Naive thymus-derived CD4-positive, alpha-beta T cell (primary cell): ENCODE measurements at regions of chr19 and their contacts with region 1.

Region 1: DNA sequence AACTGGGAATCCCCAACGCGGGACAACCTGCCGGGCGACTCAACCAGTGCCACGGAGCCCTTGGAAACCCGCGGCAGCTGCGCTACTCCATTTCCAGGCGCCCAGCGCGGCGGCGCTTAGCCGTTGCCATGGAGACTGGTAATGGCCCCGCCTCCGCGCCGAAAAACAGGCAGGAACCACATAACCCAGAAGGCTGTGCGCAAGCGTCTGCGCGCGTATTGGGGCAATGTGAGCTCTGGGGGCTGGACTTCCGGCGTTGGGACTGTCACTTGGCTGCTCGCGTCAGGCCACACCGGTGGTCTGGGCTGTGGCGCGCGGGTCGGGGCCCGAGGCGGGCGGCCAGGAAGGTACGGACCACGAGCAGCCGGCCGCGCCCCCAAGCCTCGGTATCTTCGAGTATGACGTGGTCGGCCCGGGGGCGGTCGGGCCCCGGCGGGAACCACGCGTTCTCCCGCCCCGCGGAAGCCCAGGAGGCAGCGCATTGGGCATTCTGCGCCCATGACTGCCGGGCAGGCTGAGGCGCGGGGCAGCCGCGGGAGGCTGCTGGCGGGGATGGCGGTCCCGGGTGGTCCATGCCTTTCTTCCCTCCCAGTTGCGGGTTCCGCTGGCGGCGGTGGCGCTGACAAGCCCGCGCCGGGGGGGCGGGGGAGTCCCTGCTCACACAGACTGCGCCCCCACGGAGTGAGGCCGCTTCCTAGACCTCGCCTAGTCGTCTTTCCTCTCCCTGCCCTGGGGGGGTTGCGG is at the start of gene ZNF324B:
- DNase-seq: peak; percentile 90 to 97 (median 94)
- ATAC-seq: peak; percentile 99
- H3K4me3 ChIP-seq: peak within 1 kb of the TSS; percentile 63
- H3K4me3 Mint-ChIP-seq: peak within 1 kb of the TSS; percentile 85 to 98 (median 88)
- H3K27ac ChIP-seq: peak within 1 kb of the TSS; percentile 81
- H3K27ac Mint-ChIP-seq: peak within 1 kb of the TSS in 8 of 9 donors; percentile 2 to 90 (median 71)
- H3K4me1 ChIP-seq: peaks cover 0 to 4% of the 10 kb centered on the region in 2 donors
- H3K4me1 Mint-ChIP-seq: peaks cover 12 to 23% (median 19%) of the 10 kb centered on the region in 7 donors
- H3K27me3 ChIP-seq: no peaks in the 10 kb centered on the region
- H3K27me3 Mint-ChIP-seq: peaks cover 8 to 26% (median 17%) of the 10 kb centered on the region in 5 donors
- total RNA-seq, gene ZNF324B: 9.1 to 13.9 (median 11.8) TPM

Region 2: GRCh38 chr19:57279418-57280066 is 1172.0 kb before region 1 on chr19:
- CTCF ChIA-PET with region 1: no interaction called
- POLR2A ChIA-PET with region 1: no interaction called
- intact Hi-C with region 1: loop called in 1 of 2 experiments (anchors 5 kb)
- DNase-seq: peak in 6 of 9 donors; percentile 60 to 81 (median 78)
- ATAC-seq: peak; percentile 85
- H3K4me3 ChIP-seq: peak overlapping the region; percentile 80
- H3K4me3 Mint-ChIP-seq: no peak overlapping the region
- H3K27ac ChIP-seq: peak overlapping the region; percentile 98
- H3K27ac Mint-ChIP-seq: peak overlapping the region in 2 of 9 donors; percentile 6 to 51
- H3K4me1 ChIP-seq: peaks cover 18 to 23% of the 10 kb centered on the region in 2 donors
- H3K4me1 Mint-ChIP-seq: peaks cover 7 to 33% (median 25%) of the 10 kb centered on the region in 7 donors
- H3K27me3 ChIP-seq: no peaks in the 10 kb centered on the region
- H3K27me3 Mint-ChIP-seq: no peaks in the 10 kb centered on the region

Region 3: GRCh38 chr19:58107778-58108545 is 343.6 kb before region 1 on chr19:
- CTCF ChIA-PET with region 1: no interaction called
- POLR2A ChIA-PET with region 1: no interaction called
- intact Hi-C with region 1: no loop called
- DNase-seq: no peak
- ATAC-seq: no peak
- H3K4me3 ChIP-seq: no peak overlapping the region
- H3K4me3 Mint-ChIP-seq: no peak overlapping the region
- H3K27ac ChIP-seq: no peak overlapping the region
- H3K27ac Mint-ChIP-seq: no peak overlapping the region
- H3K4me1 ChIP-seq: no peaks in the 10 kb centered on the region
- H3K4me1 Mint-ChIP-seq: no peaks in the 10 kb centered on the region
- H3K27me3 ChIP-seq: no peaks in the 10 kb centered on the region
- H3K27me3 Mint-ChIP-seq: peaks cover 0 to 6% (median 0%) of the 10 kb centered on the region in 5 donors

Region 4: GRCh38 chr19:58362272-58362994 is 89.1 kb before region 1 on chr19 and contains the start of gene ZNF497:
- CTCF ChIA-PET with region 1: no interaction called
- POLR2A ChIA-PET with region 1: no interaction called
- intact Hi-C with region 1: loop called in 1 of 2 experiments (anchors 1 kb)
- DNase-seq: peak; percentile 91 to 96 (median 95)
- ATAC-seq: peak; percentile 92
- H3K4me3 ChIP-seq: peak within 1 kb of the TSS; percentile 99
- H3K4me3 Mint-ChIP-seq: peak within 1 kb of the TSS; percentile 89 to 99 (median 95)
- H3K27ac ChIP-seq: peak within 1 kb of the TSS; percentile 78
- H3K27ac Mint-ChIP-seq: peak within 1 kb of the TSS; percentile 71 to 96 (median 90)
- H3K4me1 ChIP-seq: peaks cover 5 to 7% of the 10 kb centered on the region in 2 donors
- H3K4me1 Mint-ChIP-seq: peaks cover 7 to 21% (median 11%) of the 10 kb centered on the region in 7 donors
- H3K27me3 ChIP-seq: no peaks in the 10 kb centered on the region
- H3K27me3 Mint-ChIP-seq: peaks cover 0 to 5% (median 0%) of the 10 kb centered on the region in 5 donors
- total RNA-seq, gene ZNF497: 1.0 to 2.7 (median 1.8) TPM

Region 5: GRCh38 chr19:58400916-58401839 is 50.4 kb before region 1 on chr19:
- CTCF ChIA-PET with region 1: no interaction called
- POLR2A ChIA-PET with region 1: no interaction called
- intact Hi-C with region 1: loop called (anchors 1 kb)
- DNase-seq: peak; percentile 96 to 100 (median 98)
- ATAC-seq: peak; percentile 97
- H3K4me3 ChIP-seq: peak overlapping the region; percentile 77
- H3K4me3 Mint-ChIP-seq: peak overlapping the region; percentile 86 to 98 (median 94)
- H3K27ac ChIP-seq: peak overlapping the region; percentile 91
- H3K27ac Mint-ChIP-seq: peak overlapping the region; percentile 88 to 97 (median 94)
- H3K4me1 ChIP-seq: peaks cover 6 to 13% of the 10 kb centered on the region in 2 donors
- H3K4me1 Mint-ChIP-seq: peaks cover 6 to 19% (median 8%) of the 10 kb centered on the region in 7 donors
- H3K27me3 ChIP-seq: peaks cover 0 to 3% of the 10 kb centered on the region in 2 donors
- H3K27me3 Mint-ChIP-seq: peaks cover 5 to 20% (median 7%) of the 10 kb centered on the region in 5 donors

Region 6: GRCh38 chr19:58475714-58476497 is 24.4 kb after region 1 on chr19 and contains the start of gene ZNF446:
- CTCF ChIA-PET with region 1: no interaction called
- POLR2A ChIA-PET with region 1: no interaction called
- intact Hi-C with region 1: loop called (anchors 1 kb)
- DNase-seq: peak; percentile 84 to 97 (median 96)
- ATAC-seq: peak; percentile 92
- H3K4me3 ChIP-seq: peak within 1 kb of the TSS; percentile 77
- H3K4me3 Mint-ChIP-seq: peak within 1 kb of the TSS; percentile 78 to 99 (median 96)
- H3K27ac ChIP-seq: peak within 1 kb of the TSS; percentile 91
- H3K27ac Mint-ChIP-seq: peak within 1 kb of the TSS; percentile 87 to 100 (median 99)
- H3K4me1 ChIP-seq: peaks cover 14 to 16% of the 10 kb centered on the region in 2 donors
- H3K4me1 Mint-ChIP-seq: peaks cover 6 to 29% (median 17%) of the 10 kb centered on the region in 7 donors
- H3K27me3 ChIP-seq: no peaks in the 10 kb centered on the region
- H3K27me3 Mint-ChIP-seq: no peaks in the 10 kb centered on the region
- total RNA-seq, gene ZNF446: 9.5 to 20.0 (median 15.1) TPM

Region 7: GRCh38 chr19:58519355-58520256 is 68.1 kb after region 1 on chr19 and contains the start of gene ZBTB45:
- CTCF ChIA-PET with region 1: no interaction called
- POLR2A ChIA-PET with region 1: no interaction called
- intact Hi-C with region 1: loop called in 1 of 2 experiments (anchors 1 kb)
- DNase-seq: peak; percentile 81 to 97 (median 88)
- ATAC-seq: peak; percentile 89
- H3K4me3 ChIP-seq: peak within 1 kb of the TSS; percentile 76
- H3K4me3 Mint-ChIP-seq: peak within 1 kb of the TSS; percentile 90 to 97 (median 95)
- H3K27ac ChIP-seq: peak within 1 kb of the TSS; percentile 86
- H3K27ac Mint-ChIP-seq: peak within 1 kb of the TSS; percentile 92 to 99 (median 97)
- H3K4me1 ChIP-seq: peaks cover 10 to 14% of the 10 kb centered on the region in 2 donors
- H3K4me1 Mint-ChIP-seq: peaks cover 29 to 43% (median 37%) of the 10 kb centered on the region in 7 donors
- H3K27me3 ChIP-seq: no peaks in the 10 kb centered on the region
- H3K27me3 Mint-ChIP-seq: peaks cover 0 to 3% (median 0%) of the 10 kb centered on the region in 5 donors
- total RNA-seq, gene ZBTB45: 9.8 to 19.2 (median 17.0) TPM

Region 8: DNA sequence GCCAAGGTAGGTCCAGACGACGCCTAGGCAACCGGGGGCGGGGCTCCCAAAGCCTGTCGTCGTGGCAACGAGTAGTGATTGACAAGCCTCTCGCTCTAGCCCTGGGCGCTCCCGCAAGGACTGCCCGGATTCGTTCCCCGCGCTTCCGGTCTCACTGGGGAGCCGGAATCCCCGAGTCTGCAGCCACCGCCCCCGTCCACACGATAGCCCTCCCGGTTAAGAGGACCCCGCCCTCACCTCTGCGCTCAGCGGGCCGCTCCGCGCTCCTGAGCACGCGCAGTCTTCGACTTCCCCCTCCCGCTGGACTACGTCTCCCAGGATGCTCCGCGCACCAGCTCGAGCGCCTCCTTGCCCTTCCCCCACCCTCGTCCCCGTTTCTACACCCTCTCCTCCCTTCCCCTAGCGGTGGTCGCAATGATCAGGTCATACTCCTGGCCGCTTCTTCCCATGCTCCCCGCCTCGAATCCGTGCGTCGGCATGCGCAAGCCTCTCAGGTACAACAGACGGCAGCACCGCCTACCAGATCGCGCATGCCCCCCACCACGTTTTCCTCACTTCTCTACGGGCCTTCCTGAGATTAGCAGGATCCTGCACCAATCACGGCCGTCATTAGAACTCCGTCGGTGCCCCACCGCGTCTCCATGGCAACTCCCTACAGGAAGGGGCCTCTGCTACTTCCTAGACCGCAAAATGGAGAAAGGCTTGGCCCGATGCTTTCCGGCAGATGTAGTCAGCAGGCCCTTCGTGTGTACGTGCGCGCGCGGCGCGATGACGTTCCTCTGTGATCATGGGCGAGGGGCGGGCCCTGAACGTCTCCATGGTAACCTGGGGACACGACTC is 121.5 kb after region 1 on chr19 and contains the start of gene MZF1:
- CTCF ChIA-PET with region 1: no interaction called
- POLR2A ChIA-PET with region 1: no interaction called
- intact Hi-C with region 1: loop called in 1 of 2 experiments (anchors 1 kb)
- DNase-seq: peak; percentile 97 to 100 (median 100)
- ATAC-seq: peak; percentile 81
- H3K4me3 ChIP-seq: peak within 1 kb of the TSS; percentile 71
- H3K4me3 Mint-ChIP-seq: peak within 1 kb of the TSS; percentile 82 to 100 (median 98)
- H3K27ac ChIP-seq: peak within 1 kb of the TSS; percentile 97
- H3K27ac Mint-ChIP-seq: peak within 1 kb of the TSS; percentile 97 to 100 (median 100)
- H3K4me1 ChIP-seq: peaks cover 19 to 20% of the 10 kb centered on the region in 2 donors
- H3K4me1 Mint-ChIP-seq: peaks cover 27 to 50% (median 33%) of the 10 kb centered on the region in 7 donors
- H3K27me3 ChIP-seq: no peaks in the 10 kb centered on the region
- H3K27me3 Mint-ChIP-seq: peaks cover 0 to 4% (median 0%) of the 10 kb centered on the region in 5 donors
- total RNA-seq, gene MZF1: 35.0 to 51.8 (median 44.9) TPM